ENCODE measurements at regions of chr15 and their contacts with region 1.

Region 1: DNA sequence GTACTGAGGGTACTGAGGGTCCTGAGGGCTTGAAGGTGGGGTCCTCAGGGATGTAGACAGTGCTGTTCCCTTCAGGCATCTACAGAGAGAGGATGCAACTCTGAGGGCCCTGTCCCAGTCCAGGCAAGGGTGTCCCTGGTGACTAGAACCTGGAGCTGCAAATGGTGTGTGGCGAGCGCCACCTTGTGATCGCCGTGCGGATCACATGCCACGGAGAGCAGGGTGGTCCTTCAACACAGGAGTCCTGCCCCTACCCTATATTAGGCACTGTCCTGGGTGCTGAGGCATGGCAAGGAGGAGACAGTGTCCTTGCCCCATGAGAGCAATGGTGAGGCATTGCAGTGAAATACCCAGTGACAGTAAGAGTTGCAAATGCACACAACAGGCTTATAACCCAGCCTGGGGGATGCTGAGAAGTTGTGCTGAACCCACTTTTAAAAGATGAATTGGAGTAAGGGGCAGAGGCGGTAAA is 23.6 kb downstream of the RHCG start:
- DNase-seq: peak; percentile 33
- H3K4me3 Mint-ChIP-seq: no peak overlapping the region
- H3K27ac Mint-ChIP-seq: no peak overlapping the region
- H3K4me1 Mint-ChIP-seq: no peaks in the 10 kb centered on the region
- H3K27me3 Mint-ChIP-seq: peaks cover 24% of the 10 kb centered on the region

Region 2: DNA sequence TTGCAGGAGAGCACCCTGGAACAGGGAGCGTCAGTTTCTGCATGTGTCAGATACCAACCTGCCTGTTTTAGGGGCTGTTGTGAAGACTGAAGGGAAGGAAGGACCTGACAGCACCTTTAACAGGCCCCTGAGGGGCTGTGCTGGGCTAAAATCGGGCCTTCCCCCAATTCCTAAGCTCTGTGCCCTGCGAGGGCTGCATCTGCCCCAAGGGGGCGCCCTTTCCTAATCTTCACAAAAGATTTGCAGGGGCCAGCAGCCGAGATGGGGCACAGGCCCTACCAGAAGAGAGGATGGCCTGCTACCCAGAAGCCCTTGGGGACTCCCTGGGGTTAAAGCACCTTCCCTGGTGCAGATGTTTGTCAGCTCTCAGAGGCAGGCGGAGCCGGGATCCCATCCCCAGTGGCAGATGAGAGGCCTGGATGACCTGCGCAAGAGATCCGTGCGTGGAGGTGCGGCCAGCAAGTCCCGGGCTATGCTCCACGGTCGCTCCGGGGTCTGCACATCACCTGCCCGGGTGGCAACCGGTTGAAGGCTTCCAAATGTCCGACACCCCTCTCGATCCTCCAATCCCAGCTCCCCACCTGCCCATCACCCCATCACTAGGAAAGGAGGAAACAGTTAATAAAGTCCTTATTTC is 30.0 kb before region 1 on chr15:
- intact Hi-C with region 1: loop called (anchors 1 kb)
- DNase-seq: peak; percentile 22
- H3K4me3 Mint-ChIP-seq: no peak overlapping the region
- H3K27ac Mint-ChIP-seq: no peak overlapping the region
- H3K4me1 Mint-ChIP-seq: no peaks in the 10 kb centered on the region
- H3K27me3 Mint-ChIP-seq: peaks cover 4% of the 10 kb centered on the region

Measured in activated T-helper 1 cell treated with anti-CD3 and anti-CD28 coated beads, Interleukin-12 subunit alpha, Interleukin-12 subunit beta, Interleukin-2, Interleukin-4 antibody, amounts not matched to agents 30 ng/mL and 10 ng/mL and 1 ng/mL, durations not matched to agents 14 hours and 24 hours and 36 hours (primary cell).